Activated CD4-positive, alpha-beta T cell treated with anti-CD3 and anti-CD28 coated beads, Interleukin-2, amount 10 ng/mL, durations not matched to agents 7 days and 5 days (primary cell): ENCODE measurements at regions of chr1 and their contacts with region 1.

Region 1: DNA sequence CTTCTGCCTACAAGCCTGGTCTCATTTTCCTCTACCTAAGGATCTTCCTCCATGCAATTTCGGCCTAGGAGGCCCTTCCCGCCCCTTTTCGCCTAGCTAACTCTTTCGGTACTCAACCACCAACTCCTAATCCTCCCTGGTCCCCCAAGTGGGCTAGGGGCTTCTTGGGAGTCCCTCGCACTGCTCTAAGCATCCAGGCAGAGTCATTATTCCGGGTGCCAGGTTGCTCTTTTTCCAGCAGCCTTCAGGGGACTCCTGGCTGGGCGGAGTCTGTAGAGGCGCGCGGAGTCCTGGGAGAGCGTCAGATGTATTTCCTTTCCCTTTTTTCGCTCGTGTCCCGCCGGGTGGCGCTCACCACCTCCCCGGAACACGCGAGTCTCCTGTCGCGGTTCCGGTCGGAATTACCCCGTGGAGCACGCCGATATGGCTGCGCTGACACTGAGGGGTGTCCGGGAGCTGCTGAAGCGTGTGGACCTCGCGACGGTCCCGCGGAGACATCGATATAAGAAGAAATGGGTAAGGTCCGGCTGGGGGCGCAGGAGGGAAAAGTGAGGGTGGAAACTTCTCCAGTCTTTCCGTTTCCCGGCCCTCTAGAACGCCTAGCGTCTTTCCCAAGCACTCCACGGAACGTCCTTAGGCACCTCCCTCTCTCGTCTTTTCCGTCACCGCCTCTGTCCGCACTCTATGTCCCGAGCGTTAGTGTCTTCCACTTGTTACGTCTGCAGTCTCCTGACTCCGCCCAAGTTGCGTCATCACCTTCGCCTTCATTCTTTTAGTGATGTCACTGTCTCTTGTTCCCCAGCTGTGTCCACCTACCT is at the start of gene NSUN4:
- DNase-seq: peak; percentile 89
- H3K4me3 Mint-ChIP-seq: peak within 1 kb of the TSS; percentile 100
- H3K27ac Mint-ChIP-seq: peak within 1 kb of the TSS; percentile 99
- H3K4me1 Mint-ChIP-seq: peaks cover 45% of the 10 kb centered on the region
- H3K27me3 Mint-ChIP-seq: no peaks in the 10 kb centered on the region
- total RNA-seq, gene NSUN4: 22.2 to 22.3 TPM

Region 2: GRCh38 chr1:46236882-46237281 is 103.7 kb before region 1 on chr1:
- CTCF ChIA-PET with region 1: no interaction called
- POLR2A ChIA-PET with region 1: no interaction called
- DNase-seq: no peak
- H3K4me3 Mint-ChIP-seq: no peak overlapping the region
- H3K27ac Mint-ChIP-seq: no peak overlapping the region
- H3K4me1 Mint-ChIP-seq: peaks cover 3% of the 10 kb centered on the region
- H3K27me3 Mint-ChIP-seq: no peaks in the 10 kb centered on the region

Region 3: DNA sequence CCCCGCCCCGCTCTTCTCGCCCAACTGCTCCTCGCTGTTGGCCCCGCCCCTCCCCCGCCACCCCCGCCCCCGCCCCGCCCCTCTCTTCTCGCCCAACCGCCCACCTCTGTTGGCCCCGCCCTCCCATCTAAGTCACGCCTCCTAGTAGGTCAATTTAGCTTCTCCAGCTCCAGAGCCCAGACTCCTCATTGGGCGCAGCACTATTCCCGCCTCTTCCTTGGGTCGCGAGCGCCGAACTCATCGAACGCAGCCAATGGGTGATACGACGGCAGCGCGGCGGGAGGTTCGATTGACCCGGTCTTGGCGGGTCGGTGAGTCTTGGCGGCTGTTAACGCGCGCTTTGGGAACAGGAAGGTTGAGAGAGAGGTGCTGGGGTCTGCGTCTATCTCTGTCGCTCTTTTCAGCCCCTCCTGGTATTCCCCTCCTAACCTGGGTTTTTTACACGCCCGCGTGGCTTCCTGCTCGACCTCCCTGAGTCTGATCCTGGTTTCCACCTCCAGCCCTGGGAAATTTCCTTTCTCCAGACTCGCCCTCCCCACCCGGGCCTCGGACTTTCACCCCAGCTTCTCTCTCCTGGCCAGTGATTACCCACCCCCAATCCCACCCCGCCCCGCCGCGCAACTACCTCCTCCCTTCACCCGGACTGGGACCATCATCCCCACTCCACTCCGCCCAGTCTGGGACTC is 93.0 kb before region 1 on chr1 and contains the start of gene RAD54L:
- CTCF ChIA-PET with region 1: interaction called, 16 read pairs
- POLR2A ChIA-PET with region 1: interaction called, 3 read pairs
- DNase-seq: peak; percentile 98
- H3K4me3 Mint-ChIP-seq: peak within 1 kb of the TSS; percentile 99
- H3K27ac Mint-ChIP-seq: peak within 1 kb of the TSS; percentile 98
- H3K4me1 Mint-ChIP-seq: peaks cover 54% of the 10 kb centered on the region
- H3K27me3 Mint-ChIP-seq: no peaks in the 10 kb centered on the region
- total RNA-seq, gene RAD54L: 46.7 to 54.0 TPM

Region 4: GRCh38 chr1:46487818-46488218 is 147.2 kb after region 1 on chr1:
- CTCF ChIA-PET with region 1: no interaction called
- POLR2A ChIA-PET with region 1: no interaction called
- DNase-seq: no peak
- H3K4me3 Mint-ChIP-seq: no peak overlapping the region
- H3K27ac Mint-ChIP-seq: no peak overlapping the region
- H3K4me1 Mint-ChIP-seq: peaks cover 17% of the 10 kb centered on the region
- H3K27me3 Mint-ChIP-seq: peaks cover 90% of the 10 kb centered on the region